ENCODE measurements at regions of chr15 and their contacts with region 1.

Region 1: GRCh38 chr15:85730001-85730820 is 64.5 kb downstream of the KLHL25 start:
- DNase-seq: peak; percentile 53
- H3K4me3 ChIP-seq: no peak overlapping the region
- H3K27ac ChIP-seq: no peak overlapping the region
- H3K4me1 ChIP-seq: peaks cover 6% of the 10 kb centered on the region
- H3K27me3 ChIP-seq: no peaks in the 10 kb centered on the region
- CTCF ChIP-seq: peak; percentile 62 to 78

Region 2: DNA sequence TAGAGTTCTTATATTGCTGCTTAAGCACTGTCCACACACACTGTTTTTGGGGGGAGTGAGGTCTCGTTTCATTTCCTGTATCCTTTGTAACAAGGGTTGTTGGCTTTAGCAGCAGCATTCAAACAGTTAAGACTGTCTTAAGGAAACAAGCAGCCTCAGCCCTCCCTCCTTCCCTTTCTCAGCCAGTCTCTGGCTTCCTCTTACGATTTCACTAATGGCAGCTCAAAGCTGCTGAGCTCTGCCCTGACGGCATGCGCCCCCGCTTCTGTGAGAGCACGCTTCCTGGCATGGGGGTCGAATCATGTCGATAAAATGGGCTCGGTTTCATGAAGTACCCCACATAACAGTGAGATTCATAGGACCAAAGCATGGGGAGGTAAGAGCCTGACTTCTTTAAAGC is 40.5 kb before region 1 on chr15:
- CTCF ChIA-PET with region 1: no interaction called
- dilution Hi-C with region 1: no loop called
- in situ Hi-C with region 1: no loop called
- intact Hi-C with region 1: no loop called
- DNase-seq: no peak
- H3K4me3 ChIP-seq: no peak overlapping the region
- H3K27ac ChIP-seq: no peak overlapping the region
- H3K4me1 ChIP-seq: no peaks in the 10 kb centered on the region
- H3K27me3 ChIP-seq: no peaks in the 10 kb centered on the region
- CTCF ChIP-seq: no peak

Region 3: GRCh38 chr15:85771781-85772445 is 41.7 kb after region 1 on chr15:
- CTCF ChIA-PET with region 1: no interaction called
- dilution Hi-C with region 1: no loop called
- in situ Hi-C with region 1: no loop called
- intact Hi-C with region 1: no loop called
- DNase-seq: no peak
- H3K4me3 ChIP-seq: no peak overlapping the region
- H3K27ac ChIP-seq: peak overlapping the region; percentile 42
- H3K4me1 ChIP-seq: peaks cover 28% of the 10 kb centered on the region
- H3K27me3 ChIP-seq: no peaks in the 10 kb centered on the region
- CTCF ChIP-seq: no peak

Region 4: GRCh38 chr15:85794603-85795336 is 64.6 kb after region 1 on chr15 and contains the start of gene KLHL25:
- CTCF ChIA-PET with region 1: no interaction called
- dilution Hi-C with region 1: no loop called
- in situ Hi-C with region 1: no loop called
- intact Hi-C with region 1: loop called (anchors 5 kb)
- DNase-seq: peak; percentile 94
- H3K4me3 ChIP-seq: peak within 1 kb of the TSS; percentile 76 to 82 (median 78)
- H3K27ac ChIP-seq: peak within 1 kb of the TSS; percentile 54
- H3K4me1 ChIP-seq: peaks cover 16% of the 10 kb centered on the region
- H3K27me3 ChIP-seq: no peaks in the 10 kb centered on the region
- CTCF ChIP-seq: no peak
- total RNA-seq, gene KLHL25: 7.7 to 12.2 TPM